Activated CD8-positive, alpha-beta memory T cell treated with anti-CD3 and anti-CD28 coated beads, Interleukin-2, amount 10 ng/mL, durations not matched to agents 7 days and 5 days (primary cell): ENCODE measurements at regions of chr1 and their contacts with region 1.

Region 1: GRCh38 chr1:156319664-156320063 is 18.4 kb downstream of the CCT3 start:
- DNase-seq: no peak
- ATAC-seq: no peak
- H3K4me3 Mint-ChIP-seq: no peak overlapping the region
- H3K27ac Mint-ChIP-seq: no peak overlapping the region
- H3K4me1 Mint-ChIP-seq: no peaks in the 10 kb centered on the region
- H3K27me3 Mint-ChIP-seq: no peaks in the 10 kb centered on the region

Region 2: GRCh38 chr1:156140879-156141252 is 178.8 kb before region 1 on chr1:
- CTCF ChIA-PET with region 1: interaction called, 29 read pairs
- DNase-seq: no peak
- ATAC-seq: no peak
- H3K4me3 Mint-ChIP-seq: no peak overlapping the region
- H3K27ac Mint-ChIP-seq: no peak overlapping the region
- H3K4me1 Mint-ChIP-seq: peaks cover 5% of the 10 kb centered on the region
- H3K27me3 Mint-ChIP-seq: no peaks in the 10 kb centered on the region

Region 3: GRCh38 chr1:156146020-156146768 is 173.5 kb before region 1 on chr1:
- CTCF ChIA-PET with region 1: interaction called, 29 read pairs
- DNase-seq: peak; percentile 70
- ATAC-seq: peak; percentile 90
- H3K4me3 Mint-ChIP-seq: peak overlapping the region; percentile 63
- H3K27ac Mint-ChIP-seq: peak overlapping the region; percentile 91
- H3K4me1 Mint-ChIP-seq: peaks cover 35% of the 10 kb centered on the region
- H3K27me3 Mint-ChIP-seq: no peaks in the 10 kb centered on the region

Region 4: GRCh38 chr1:156268336-156268735 is 51.3 kb before region 1 on chr1:
- CTCF ChIA-PET with region 1: no interaction called
- DNase-seq: no peak
- ATAC-seq: no peak
- H3K4me3 Mint-ChIP-seq: no peak overlapping the region
- H3K27ac Mint-ChIP-seq: no peak overlapping the region
- H3K4me1 Mint-ChIP-seq: no peaks in the 10 kb centered on the region
- H3K27me3 Mint-ChIP-seq: no peaks in the 10 kb centered on the region

Region 5: GRCh38 chr1:156282479-156283222 is 37.0 kb before region 1 on chr1 and contains the start of gene SMG5:
- CTCF ChIA-PET with region 1: interaction called, 19 read pairs
- DNase-seq: peak; percentile 99
- ATAC-seq: peak; percentile 92
- H3K4me3 Mint-ChIP-seq: peak within 1 kb of the TSS; percentile 94
- H3K27ac Mint-ChIP-seq: peak within 1 kb of the TSS; percentile 91
- H3K4me1 Mint-ChIP-seq: peaks cover 39% of the 10 kb centered on the region
- H3K27me3 Mint-ChIP-seq: no peaks in the 10 kb centered on the region
- total RNA-seq, gene SMG5: 89.4 to 103 TPM

Region 6: DNA sequence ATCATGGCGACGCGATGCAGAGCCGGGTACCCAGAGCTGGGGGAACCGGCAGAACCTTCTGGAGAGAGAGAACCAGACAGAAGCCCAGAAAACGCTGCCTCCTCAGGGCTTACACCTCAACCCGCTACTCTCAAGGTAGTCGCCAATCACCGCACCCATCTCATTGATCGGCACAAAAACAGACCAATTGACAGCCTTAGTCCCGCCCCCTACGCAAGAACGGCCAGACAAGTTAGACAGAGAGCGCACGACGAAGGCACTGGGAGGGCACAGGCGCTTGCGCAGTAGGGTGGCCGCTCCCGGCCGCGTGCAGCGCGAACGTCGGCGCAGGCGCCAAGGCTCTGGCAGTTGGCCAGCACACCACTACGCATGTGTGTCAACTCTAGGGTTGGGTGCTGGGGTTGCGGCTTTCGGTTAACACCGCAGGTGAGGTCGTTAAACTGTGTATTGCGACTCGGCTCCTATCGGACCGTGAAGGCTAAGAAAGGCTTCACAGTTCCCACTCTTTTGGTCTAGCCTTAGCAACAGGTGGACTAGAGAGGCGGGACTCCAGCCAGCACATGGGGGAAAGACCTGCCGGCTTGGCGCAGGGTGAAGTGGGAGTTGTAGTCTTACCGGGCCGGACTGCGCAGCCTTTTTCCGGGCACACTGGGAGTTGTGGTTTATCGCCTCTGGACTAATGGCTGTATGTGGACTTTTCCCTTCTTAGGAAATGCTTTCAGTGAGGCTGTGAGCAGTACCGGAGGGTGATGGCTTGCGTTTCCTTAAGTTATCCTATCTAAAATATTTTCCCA is 18.7 kb after region 1 on chr1 and contains the starts of genes CCT3 and TSACC:
- CTCF ChIA-PET with region 1: interaction called, 16 read pairs
- DNase-seq: peak; percentile 99
- ATAC-seq: peak; percentile 95
- H3K4me3 Mint-ChIP-seq: peak within 1 kb of the TSS; percentile 95
- H3K27ac Mint-ChIP-seq: peak within 1 kb of the TSS; percentile 89
- H3K4me1 Mint-ChIP-seq: peaks cover 30% of the 10 kb centered on the region
- H3K27me3 Mint-ChIP-seq: peaks cover 10% of the 10 kb centered on the region
- total RNA-seq, gene CCT3: 253 to 361 TPM
- total RNA-seq, gene TSACC: not detected